ENCODE measurements at regions of chr5 and their contacts with region 1.

Region 1: GRCh38 chr5:86880785-86881492 is 263.2 kb downstream of the COX7C start:
- DNase-seq: peak; percentile 56
- ATAC-seq: peak; percentile 94
- H3K4me3 ChIP-seq: no peak overlapping the region
- H3K27ac ChIP-seq: 0 out of 2 replicates have a peak overlapping the region, but pooled peaks have one; percentile 34
- H3K4me1 ChIP-seq: no peaks in the 10 kb centered on the region
- H3K27me3 ChIP-seq: no peaks in the 10 kb centered on the region
- CTCF ChIP-seq: peak; percentile 72

Region 2: GRCh38 chr5:86866036-86866435 is 14.9 kb before region 1 on chr5:
- CTCF ChIA-PET with region 1: no interaction called
- POLR2A ChIA-PET with region 1: no interaction called
- in situ Hi-C with region 1: no loop called
- intact Hi-C with region 1: no loop called
- DNase-seq: no peak
- ATAC-seq: no peak
- H3K4me3 ChIP-seq: no peak overlapping the region
- H3K27ac ChIP-seq: no peak overlapping the region
- H3K4me1 ChIP-seq: no peaks in the 10 kb centered on the region
- H3K27me3 ChIP-seq: no peaks in the 10 kb centered on the region
- CTCF ChIP-seq: no peak

Region 3: GRCh38 chr5:86894006-86894560 is 13.1 kb after region 1 on chr5:
- CTCF ChIA-PET with region 1: no interaction called
- POLR2A ChIA-PET with region 1: no interaction called
- in situ Hi-C with region 1: no loop called
- intact Hi-C with region 1: no loop called
- DNase-seq: no peak
- ATAC-seq: no peak
- H3K4me3 ChIP-seq: no peak overlapping the region
- H3K27ac ChIP-seq: no peak overlapping the region
- H3K4me1 ChIP-seq: no peaks in the 10 kb centered on the region
- H3K27me3 ChIP-seq: no peaks in the 10 kb centered on the region
- CTCF ChIP-seq: no peak

Region 4: GRCh38 chr5:86968301-86968753 is 87.4 kb after region 1 on chr5:
- CTCF ChIA-PET with region 1: interaction called, 6 read pairs
- POLR2A ChIA-PET with region 1: no interaction called
- in situ Hi-C with region 1: no loop called
- intact Hi-C with region 1: loop called (anchors 2 kb)
- DNase-seq: peak; percentile 38
- ATAC-seq: no peak
- H3K4me3 ChIP-seq: no peak overlapping the region
- H3K27ac ChIP-seq: peak overlapping the region; percentile 62
- H3K4me1 ChIP-seq: no peaks in the 10 kb centered on the region
- H3K27me3 ChIP-seq: no peaks in the 10 kb centered on the region
- CTCF ChIP-seq: peak; percentile 33; the same call in 1 of the 2 replicates

Region 5: GRCh38 chr5:87008751-87009560 is 128.0 kb after region 1 on chr5:
- CTCF ChIA-PET with region 1: no interaction called
- POLR2A ChIA-PET with region 1: no interaction called
- in situ Hi-C with region 1: no loop called
- intact Hi-C with region 1: loop called (anchors 2 kb)
- DNase-seq: no peak
- ATAC-seq: no peak
- H3K4me3 ChIP-seq: no peak overlapping the region
- H3K27ac ChIP-seq: no peak overlapping the region
- H3K4me1 ChIP-seq: no peaks in the 10 kb centered on the region
- H3K27me3 ChIP-seq: no peaks in the 10 kb centered on the region
- CTCF ChIP-seq: no peak

Region 6: GRCh38 chr5:87185838-87186237 is 304.9 kb after region 1 on chr5:
- CTCF ChIA-PET with region 1: no interaction called
- POLR2A ChIA-PET with region 1: no interaction called
- in situ Hi-C with region 1: no loop called
- intact Hi-C with region 1: no loop called
- DNase-seq: no peak
- ATAC-seq: no peak
- H3K4me3 ChIP-seq: no peak overlapping the region
- H3K27ac ChIP-seq: no peak overlapping the region
- H3K4me1 ChIP-seq: no peaks in the 10 kb centered on the region
- H3K27me3 ChIP-seq: no peaks in the 10 kb centered on the region
- CTCF ChIP-seq: no peak

Region 7: DNA sequence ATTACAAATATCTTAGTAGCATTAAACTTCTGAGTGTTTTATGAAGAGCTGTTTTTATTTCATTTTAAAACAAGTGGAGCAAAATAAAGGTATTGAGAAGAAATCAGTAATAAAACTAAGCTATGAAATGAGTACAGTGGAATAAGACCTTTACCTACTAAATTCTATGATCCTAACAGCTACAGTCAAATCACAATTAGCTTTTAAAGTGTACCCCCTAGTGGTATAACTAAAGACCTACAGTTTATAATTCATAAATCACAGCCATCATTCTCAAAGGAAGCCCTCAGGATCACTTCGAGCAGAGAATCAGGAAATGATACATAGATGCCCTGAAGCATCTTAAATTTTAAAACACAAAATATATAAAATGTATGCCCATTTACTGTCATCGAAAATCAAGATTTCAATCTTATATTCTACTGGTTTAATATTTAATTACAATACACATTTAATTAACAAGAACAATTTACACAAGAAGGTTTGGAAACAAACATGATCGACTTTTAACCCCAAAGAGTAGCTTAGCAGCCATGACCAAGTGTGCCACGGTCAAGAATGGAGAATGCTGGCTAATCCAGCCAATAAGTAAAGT is 519.5 kb after region 1 on chr5:
- CTCF ChIA-PET with region 1: no interaction called
- POLR2A ChIA-PET with region 1: no interaction called
- in situ Hi-C with region 1: no loop called
- intact Hi-C with region 1: no loop called
- DNase-seq: no peak
- ATAC-seq: peak; percentile 71
- H3K4me3 ChIP-seq: no peak overlapping the region
- H3K27ac ChIP-seq: no peak overlapping the region
- H3K4me1 ChIP-seq: no peaks in the 10 kb centered on the region
- H3K27me3 ChIP-seq: no peaks in the 10 kb centered on the region
- CTCF ChIP-seq: peak; percentile 69; the same call in 1 of the 2 replicates